ENCODE measurements at regions of chr5 and their contacts with region 1.

Region 1: DNA sequence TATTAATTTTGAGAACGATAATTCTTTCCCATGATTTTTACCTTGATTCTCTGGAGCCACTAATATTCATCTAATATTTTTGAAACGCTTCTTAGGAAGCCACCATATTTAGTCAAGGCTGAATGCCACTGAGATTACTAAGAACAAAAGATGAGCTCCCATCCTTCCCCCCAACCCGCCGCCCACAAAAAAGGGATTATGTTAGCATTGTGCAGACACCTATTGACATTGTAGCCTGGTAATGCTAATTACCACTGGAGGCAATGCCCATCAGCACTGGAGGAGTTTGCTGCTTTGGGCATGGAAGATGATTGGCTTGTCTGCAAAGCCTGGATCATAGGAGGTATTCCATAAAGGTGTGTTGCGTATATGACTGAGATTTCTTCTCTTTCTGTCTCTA is 739.1 kb upstream of the WWC1 start:
- DNase-seq: no peak
- H3K4me3 ChIP-seq: no peak overlapping the region
- H3K27ac ChIP-seq: no peak overlapping the region
- H3K4me1 ChIP-seq: no peaks in the 10 kb centered on the region
- H3K27me3 ChIP-seq: no peaks in the 10 kb centered on the region
- CTCF ChIP-seq: no peak
- EP300 ChIP-seq: no peak
- POLR2A ChIP-seq: no peak

Region 2: DNA sequence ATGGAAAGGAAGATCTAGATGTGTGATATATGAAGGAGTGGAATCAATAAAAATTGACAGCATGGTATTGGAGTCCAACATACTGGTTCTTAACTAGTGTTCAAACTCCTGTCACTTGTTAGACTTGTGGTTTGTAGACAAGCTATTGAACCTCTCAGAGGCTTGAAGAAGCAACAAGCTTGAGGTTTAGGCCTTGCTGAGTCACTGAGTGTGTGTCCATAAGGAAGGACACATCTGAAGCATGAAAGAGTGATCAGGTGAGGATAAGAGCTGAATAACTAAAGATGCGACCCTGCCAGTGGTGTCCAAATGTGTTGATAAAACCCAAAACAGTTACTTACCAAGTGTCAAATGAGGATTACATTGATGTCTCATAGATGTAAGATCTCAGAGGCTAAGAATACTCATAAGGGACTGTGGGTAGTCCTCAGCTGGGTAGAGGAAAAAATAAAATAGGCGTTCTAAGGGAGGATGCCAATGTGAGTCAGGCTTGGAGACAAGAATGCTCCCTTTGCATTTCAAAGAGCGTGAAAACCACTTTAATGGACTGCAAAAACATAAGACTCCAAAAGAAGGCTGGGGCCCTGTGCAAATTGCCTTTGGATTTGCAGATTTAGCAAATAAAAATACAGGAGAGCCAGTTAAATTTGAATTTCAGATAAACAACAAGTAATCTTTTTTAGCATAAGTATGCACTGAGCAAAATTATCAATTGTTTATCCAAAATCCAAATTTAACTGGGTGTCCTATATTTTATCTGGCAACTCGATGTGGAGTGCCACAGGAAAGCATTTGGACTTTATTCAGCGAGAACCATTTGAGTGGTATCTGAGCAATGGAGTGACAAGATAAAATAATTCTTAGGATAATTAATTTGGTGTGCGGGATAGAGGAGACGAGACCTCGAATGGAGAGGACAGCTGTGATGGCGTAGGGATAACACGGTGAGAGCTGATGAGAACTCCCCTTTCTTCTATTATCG is 18.3 kb before region 1 on chr5:
- intact Hi-C with region 1: loop called in 1 of 4 experiments (anchors 1 kb)
- DNase-seq: no peak
- H3K4me3 ChIP-seq: no peak overlapping the region
- H3K27ac ChIP-seq: no peak overlapping the region
- H3K4me1 ChIP-seq: no peaks in the 10 kb centered on the region
- H3K27me3 ChIP-seq: no peaks in the 10 kb centered on the region
- CTCF ChIP-seq: no peak
- EP300 ChIP-seq: no peak
- POLR2A ChIP-seq: no peak